ENCODE measurements at regions of chr15 and their contacts with region 1.

Region 1: DNA sequence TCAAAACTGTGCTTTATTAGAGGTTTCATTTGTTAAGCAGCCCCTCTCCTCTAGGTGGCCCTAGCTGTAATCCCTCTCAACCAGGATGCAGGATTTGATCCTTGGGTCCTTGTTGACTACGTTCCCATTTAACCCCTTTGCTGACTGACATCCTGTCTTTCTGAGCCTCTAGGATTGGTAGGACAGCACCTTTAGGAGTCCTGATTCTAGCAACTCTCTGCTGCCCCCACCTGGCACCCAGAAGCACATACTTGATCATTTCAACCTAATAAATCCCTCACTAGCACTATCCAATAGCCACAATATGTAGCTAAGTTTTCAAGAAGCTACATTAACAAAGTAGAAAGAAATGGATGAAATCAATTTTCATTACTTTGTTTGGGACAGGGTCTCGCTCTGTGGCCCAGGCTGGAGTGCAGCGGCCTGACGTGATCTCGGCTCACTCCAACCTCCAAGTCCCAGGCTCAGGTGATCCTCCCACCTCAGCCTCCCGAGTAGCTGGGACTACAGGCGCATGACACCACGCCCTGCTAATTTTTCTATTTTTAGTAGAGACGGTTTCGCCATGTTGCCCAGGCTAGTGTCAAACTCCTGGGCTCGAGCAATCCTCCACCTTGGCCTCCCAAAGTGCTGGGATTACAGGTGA is 28.3 kb downstream of the RSL24D1 start:
- DNase-seq: peak; percentile 76 to 88
- ATAC-seq: peak; percentile 90 to 95
- H3K4me3 ChIP-seq: no peak overlapping the region
- H3K27ac ChIP-seq: no peak overlapping the region
- H3K4me1 ChIP-seq: peaks cover 7% of the 10 kb centered on the region; the same call in 1 of the 3 replicates
- CTCF ChIP-seq: peak; percentile 86
- EP300 ChIP-seq: no peak
- POLR2A ChIP-seq: no peak
- RAD21 ChIP-seq: peak; percentile 72 to 81

Region 2: DNA sequence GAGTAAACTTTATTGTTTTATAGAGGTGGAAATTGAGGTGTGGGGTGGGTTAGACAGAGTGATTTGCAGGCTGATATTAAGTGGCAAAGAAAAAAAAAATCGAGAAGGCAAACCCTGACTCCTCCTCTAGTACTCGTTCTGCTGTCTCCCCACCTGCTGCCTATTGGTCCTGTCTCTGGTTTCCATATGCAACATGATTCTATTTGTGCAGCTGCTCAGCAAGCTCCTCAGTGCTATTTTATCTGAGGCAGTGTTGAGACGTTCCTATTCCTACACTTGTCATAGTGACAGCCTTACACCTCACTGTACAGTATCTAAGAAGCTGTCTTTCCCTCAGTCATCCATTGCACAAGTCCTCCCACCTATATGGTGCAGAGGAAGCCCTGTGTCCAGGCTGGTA is 16.8 kb before region 1 on chr15:
- CTCF ChIA-PET with region 1: interaction called, 15 read pairs
- POLR2A ChIA-PET with region 1: no interaction called
- DNase-seq: no peak
- ATAC-seq: 0 out of 6 replicates have a peak, but pooled peaks of 1 of the 2 experiments have one; percentile 8
- H3K4me3 ChIP-seq: no peak overlapping the region
- H3K27ac ChIP-seq: no peak overlapping the region
- H3K4me1 ChIP-seq: no peaks in the 10 kb centered on the region
- CTCF ChIP-seq: no peak
- EP300 ChIP-seq: no peak
- POLR2A ChIP-seq: no peak
- RAD21 ChIP-seq: no peak

Measured in A549 (cell line).